PC-9 (cell line): ENCODE measurements at regions of chrX and their contacts with region 1.

Region 1: DNA sequence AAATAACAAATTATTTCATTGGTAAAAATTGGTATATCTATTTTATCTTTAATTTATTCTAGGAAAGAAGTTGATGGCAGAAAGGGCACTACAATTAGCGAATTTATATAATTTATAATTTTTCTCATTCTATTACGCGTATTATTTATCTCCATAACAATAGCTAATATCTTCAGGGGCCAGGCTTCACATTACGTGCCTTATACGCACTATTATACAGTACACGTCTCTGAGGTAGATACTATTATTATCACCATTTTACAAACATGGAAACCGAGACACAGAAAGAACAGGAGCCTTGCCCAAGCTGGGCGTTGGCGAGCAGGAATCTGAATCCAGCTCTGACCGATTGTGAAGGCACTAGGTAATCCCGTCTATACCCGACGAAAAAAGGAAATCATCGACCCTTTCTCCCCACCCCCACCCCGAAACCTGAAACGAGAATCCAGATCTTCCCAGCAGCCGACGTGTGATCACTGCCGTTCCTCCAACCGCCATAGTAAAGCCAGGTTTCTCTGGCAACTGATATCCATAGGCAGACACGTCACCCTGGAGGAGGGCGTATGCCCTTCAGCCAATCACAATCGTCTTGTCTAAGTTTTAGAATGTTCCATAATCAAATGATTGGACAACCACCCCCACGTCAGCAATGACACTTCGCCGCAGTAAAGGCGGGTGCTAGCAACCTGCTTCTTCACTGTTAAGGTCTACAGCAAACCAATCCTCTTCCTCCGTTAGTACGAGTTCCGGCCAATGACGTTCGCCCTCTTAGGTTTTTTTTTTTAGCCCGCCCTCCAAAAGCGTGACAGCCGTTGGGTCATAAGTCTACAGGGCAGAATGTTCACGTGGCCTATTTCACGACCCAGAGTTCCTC is at the start of gene MORF4L2:
- DNase-seq: peak; percentile 89 to 99
- H3K4me3 ChIP-seq: peak within 1 kb of the TSS; percentile 98
- H3K27ac ChIP-seq: peak within 1 kb of the TSS; percentile 96
- H3K4me1 ChIP-seq: peaks cover 21% of the 10 kb centered on the region
- H3K27me3 ChIP-seq: no peaks in the 10 kb centered on the region
- CTCF ChIP-seq: no peak
- total RNA-seq, gene MORF4L2: 385 and 417 TPM in 2 replicates

Region 2: GRCh38 chrX:102018208-102018607 is 1668.2 kb before region 1 on chrX:
- CTCF ChIA-PET with region 1: no interaction called
- POLR2A ChIA-PET with region 1: no interaction called
- intact Hi-C with region 1: no loop called
- DNase-seq: no peak
- H3K4me3 ChIP-seq: no peak overlapping the region
- H3K27ac ChIP-seq: no peak overlapping the region
- H3K4me1 ChIP-seq: no peaks in the 10 kb centered on the region
- H3K27me3 ChIP-seq: no peaks in the 10 kb centered on the region
- CTCF ChIP-seq: no peak

Region 3: GRCh38 chrX:103533511-103534216 is 152.8 kb before region 1 on chrX:
- CTCF ChIA-PET with region 1: no interaction called
- POLR2A ChIA-PET with region 1: no interaction called
- intact Hi-C with region 1: loop called (anchors 2 kb)
- DNase-seq: peak in 1 of 2 experiments; percentile 64
- H3K4me3 ChIP-seq: no peak overlapping the region
- H3K27ac ChIP-seq: no peak overlapping the region
- H3K4me1 ChIP-seq: 0 out of 2 replicates have a peak, but pooled peaks cover 5% of the 10 kb centered on the region
- H3K27me3 ChIP-seq: no peaks in the 10 kb centered on the region
- CTCF ChIP-seq: peak; percentile 89

Region 4: GRCh38 chrX:103585411-103586313 is 100.8 kb before region 1 on chrX and contains the start of gene TCEAL4:
- CTCF ChIA-PET with region 1: no interaction called
- POLR2A ChIA-PET with region 1: no interaction called
- intact Hi-C with region 1: loop called (anchors 2 kb)
- DNase-seq: peak in 1 of 2 experiments; percentile 27
- H3K4me3 ChIP-seq: peak within 1 kb of the TSS; percentile 74
- H3K27ac ChIP-seq: no peak within 1 kb of the TSS
- H3K4me1 ChIP-seq: peaks cover 7% of the 10 kb centered on the region; the same call in 1 of the 2 replicates
- H3K27me3 ChIP-seq: no peaks in the 10 kb centered on the region
- CTCF ChIP-seq: no peak
- total RNA-seq, gene TCEAL4: 41.0 and 42.9 TPM in 2 replicates

Region 5: GRCh38 chrX:103656632-103657031 is 29.8 kb before region 1 on chrX:
- CTCF ChIA-PET with region 1: no interaction called
- POLR2A ChIA-PET with region 1: no interaction called
- intact Hi-C with region 1: loop called (anchors 2 kb)
- DNase-seq: peak; percentile 62 to 93
- H3K4me3 ChIP-seq: no peak overlapping the region
- H3K27ac ChIP-seq: peak overlapping the region; percentile 94
- H3K4me1 ChIP-seq: peaks cover 53% of the 10 kb centered on the region
- H3K27me3 ChIP-seq: no peaks in the 10 kb centered on the region
- CTCF ChIP-seq: no peak

Region 6: GRCh38 chrX:103730796-103731493 is 44.5 kb after region 1 on chrX:
- CTCF ChIA-PET with region 1: no interaction called
- POLR2A ChIA-PET with region 1: no interaction called
- intact Hi-C with region 1: no loop called
- DNase-seq: no peak
- H3K4me3 ChIP-seq: no peak overlapping the region
- H3K27ac ChIP-seq: no peak overlapping the region
- H3K4me1 ChIP-seq: no peaks in the 10 kb centered on the region
- H3K27me3 ChIP-seq: 0 out of 2 replicates have a peak, but pooled peaks cover 3% of the 10 kb centered on the region
- CTCF ChIP-seq: no peak

Region 7: GRCh38 chrX:103774070-103774642 is 87.7 kb after region 1 on chrX:
- CTCF ChIA-PET with region 1: no interaction called
- POLR2A ChIA-PET with region 1: interaction called, 15 read pairs
- intact Hi-C with region 1: loop called (anchors 2 kb)
- DNase-seq: no peak
- H3K4me3 ChIP-seq: no peak overlapping the region
- H3K27ac ChIP-seq: no peak overlapping the region
- H3K4me1 ChIP-seq: no peaks in the 10 kb centered on the region
- H3K27me3 ChIP-seq: peaks cover 35% of the 10 kb centered on the region
- CTCF ChIP-seq: peak; percentile 64